ENCODE measurements at regions of chr17 and their contacts with region 1.

Region 1: DNA sequence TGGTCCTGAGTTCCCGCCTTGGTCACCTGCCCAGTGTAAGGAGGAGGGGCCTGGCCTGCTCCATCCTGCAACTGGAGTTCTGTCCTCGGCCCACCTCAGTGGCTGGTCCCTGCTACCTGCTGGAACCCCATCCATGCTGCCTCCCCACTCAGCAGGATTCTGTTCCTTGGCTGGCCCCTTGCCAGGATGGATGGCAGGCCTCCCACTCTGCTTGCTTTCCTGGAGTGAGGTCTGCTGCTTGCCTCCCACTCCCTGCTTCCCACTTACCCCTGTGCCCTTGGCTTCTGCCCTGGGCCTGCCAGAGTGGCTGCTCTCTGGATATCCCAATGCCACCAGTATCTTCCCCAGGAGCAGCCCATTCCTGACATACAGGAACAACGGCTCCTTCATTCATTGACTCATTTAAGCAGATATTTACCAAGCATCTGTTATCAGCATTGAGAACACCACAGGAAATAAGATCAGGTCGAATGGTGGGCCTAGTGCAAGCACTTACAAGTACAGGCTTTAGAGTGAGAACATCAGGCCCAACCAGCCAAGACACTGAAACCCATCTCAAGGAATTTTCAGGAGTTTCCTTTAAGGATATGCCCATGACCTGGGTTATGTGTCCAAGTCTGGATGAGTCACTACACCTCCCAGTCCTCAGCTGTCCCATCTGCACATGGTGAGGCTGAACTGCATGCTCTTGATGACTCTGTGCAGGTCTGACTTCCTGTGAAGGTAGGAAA is 17.0 kb upstream of the RPRML start:
- DNase-seq: no peak
- ATAC-seq: peak in 1 of 8 donors; percentile 28
- H3K4me3 ChIP-seq: no peak overlapping the region
- H3K27ac ChIP-seq: no peak overlapping the region
- H3K4me1 ChIP-seq: peaks cover 0 to 2% (median 0%) of the 10 kb centered on the region in 9 donors
- H3K27me3 ChIP-seq: no peaks in the 10 kb centered on the region
- CTCF ChIP-seq: no peak

Region 2: DNA sequence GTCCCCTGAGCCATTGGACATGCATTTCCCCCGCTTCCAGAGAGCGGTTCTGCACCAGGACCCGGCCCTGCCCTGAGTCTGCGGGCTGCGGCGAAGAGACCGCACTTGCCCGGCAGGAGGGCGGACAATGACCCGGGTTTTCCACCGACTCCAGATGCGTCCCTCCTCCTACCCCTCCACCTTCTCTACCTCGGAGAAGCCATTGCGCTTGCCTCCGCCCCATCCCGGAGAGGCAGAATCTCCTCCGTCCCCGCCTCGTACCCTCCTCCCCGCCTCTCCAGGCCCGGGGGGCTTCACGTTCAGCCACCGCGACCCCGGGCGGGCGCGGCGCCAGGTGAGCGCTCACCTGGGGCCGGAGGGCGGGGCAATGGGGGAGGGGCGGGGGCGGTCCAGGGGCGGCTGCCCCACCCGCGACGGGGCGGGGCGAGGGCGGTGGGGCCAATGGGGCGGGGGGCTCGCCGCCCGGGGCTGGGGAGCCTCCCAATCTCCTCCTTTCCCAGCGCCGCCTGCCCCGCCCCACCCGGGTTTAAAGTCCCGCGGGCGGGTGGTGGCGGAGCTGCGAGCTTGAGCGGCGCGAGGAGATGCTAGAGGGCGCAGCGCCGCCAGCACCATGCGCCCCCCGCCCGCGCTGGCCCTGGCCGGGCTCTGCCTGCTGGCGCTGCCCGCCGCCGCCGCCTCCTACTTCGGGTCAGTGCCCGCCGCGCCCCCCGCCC is 144.8 kb before region 1 on chr17 and contains the start of gene WNT9B:
- intact Hi-C with region 1: loop called in 1 of 10 experiments (anchors 5 kb)
- DNase-seq: no peak
- ATAC-seq: peak in 6 of 8 donors; percentile 44 to 57 (median 54)
- H3K4me3 ChIP-seq: peak within 1 kb of the TSS; percentile 1 to 56 (median 43)
- H3K27ac ChIP-seq: no peak within 1 kb of the TSS
- H3K4me1 ChIP-seq: peaks cover 0 to 12% (median 6%) of the 10 kb centered on the region in 9 donors
- H3K27me3 ChIP-seq: peaks cover 9 to 72% (median 53%) of the 10 kb centered on the region in 7 donors
- CTCF ChIP-seq: peak in 2 of 9 donors; percentile 19 to 23
- total RNA-seq, gene WNT9B: 0.18 to 2.4 (median 0.35) TPM

Region 3: DNA sequence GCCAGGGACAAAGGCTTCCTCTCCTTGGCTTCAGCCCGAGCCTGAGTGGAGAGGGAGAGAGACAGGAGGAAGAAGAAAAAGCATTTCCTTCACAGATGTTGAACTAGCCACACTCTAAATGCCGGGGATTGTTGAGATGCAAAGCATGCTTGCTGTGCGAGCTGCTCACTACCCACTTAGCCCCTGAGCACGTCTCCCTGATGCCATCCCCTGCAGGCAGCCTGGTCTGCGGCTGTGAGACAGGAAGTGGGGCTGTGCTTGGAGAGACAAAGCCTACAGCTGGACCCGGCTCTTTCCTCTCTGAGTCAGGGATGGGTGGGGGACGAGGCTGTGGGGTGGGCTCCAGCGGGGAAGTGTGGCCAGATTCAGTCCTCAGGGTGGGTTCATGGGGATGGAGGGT is 130.9 kb before region 1 on chr17:
- intact Hi-C with region 1: loop called in 1 of 10 experiments (anchors 10 kb)
- DNase-seq: no peak
- ATAC-seq: no peak
- H3K4me3 ChIP-seq: no peak overlapping the region
- H3K27ac ChIP-seq: no peak overlapping the region
- H3K4me1 ChIP-seq: no peaks in the 10 kb centered on the region
- H3K27me3 ChIP-seq: peaks cover 0 to 36% (median 20%) of the 10 kb centered on the region in 7 donors
- CTCF ChIP-seq: no peak

Region 4: GRCh38 chr17:46940621-46941404 is 55.2 kb before region 1 on chr17:
- intact Hi-C with region 1: loop called (anchors 1 to 5 kb)
- DNase-seq: peak; percentile 64 to 78
- ATAC-seq: peak; percentile 68 to 88 (median 78)
- H3K4me3 ChIP-seq: no peak overlapping the region
- H3K27ac ChIP-seq: peak overlapping the region in 1 of 10 donors; percentile 24
- H3K4me1 ChIP-seq: peaks cover 0 to 33% (median 18%) of the 10 kb centered on the region in 9 donors
- H3K27me3 ChIP-seq: no peaks in the 10 kb centered on the region
- CTCF ChIP-seq: peak; percentile 55 to 89 (median 84)

Region 5: DNA sequence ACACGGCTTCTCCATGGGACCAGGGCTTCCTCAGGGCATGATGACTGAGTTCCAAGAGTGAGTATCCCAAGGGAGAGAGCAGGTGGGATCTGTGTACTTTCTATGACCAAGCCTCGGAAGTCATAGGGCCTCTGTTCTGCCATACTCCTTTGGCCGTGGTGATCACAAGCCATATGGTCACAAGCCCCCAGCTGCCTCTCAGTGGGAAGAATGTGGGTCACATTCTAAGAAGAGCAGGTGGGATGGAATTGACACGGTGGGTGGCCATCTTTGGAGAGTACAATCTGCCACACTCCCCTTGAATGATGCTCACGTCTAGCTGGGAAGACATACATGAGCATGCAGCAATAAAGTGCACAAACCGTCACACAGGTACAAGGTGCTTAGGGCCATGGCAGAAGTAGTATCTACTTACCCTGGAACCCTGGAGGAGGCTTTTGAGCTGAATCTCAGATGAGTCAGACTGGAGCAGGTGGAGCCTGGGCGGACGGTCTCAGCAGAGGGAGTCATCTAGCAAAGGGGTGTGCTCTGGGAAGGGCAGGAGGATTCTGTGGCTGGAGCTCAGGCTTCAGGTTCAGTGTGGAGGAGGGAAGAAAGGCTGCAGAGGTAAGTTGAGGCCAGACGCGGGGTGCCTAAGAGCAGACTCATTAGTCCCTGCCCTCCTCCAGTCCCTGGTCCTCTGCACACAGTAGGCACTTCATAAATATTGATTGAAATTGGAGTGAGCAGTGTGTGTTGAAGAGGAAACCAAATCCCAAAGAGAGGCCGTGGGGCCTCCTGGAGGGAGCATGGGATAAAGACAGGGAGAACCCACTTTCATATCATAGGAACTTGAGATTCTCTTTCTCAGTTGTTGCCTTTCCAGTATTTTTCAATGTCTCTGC is 46.5 kb before region 1 on chr17:
- intact Hi-C with region 1: loop called in 3 of 10 experiments (anchors 2 to 5 kb)
- DNase-seq: no peak
- ATAC-seq: no peak
- H3K4me3 ChIP-seq: no peak overlapping the region
- H3K27ac ChIP-seq: no peak overlapping the region
- H3K4me1 ChIP-seq: peaks cover 0 to 17% (median 0%) of the 10 kb centered on the region in 9 donors
- H3K27me3 ChIP-seq: peaks cover 0 to 16% (median 0%) of the 10 kb centered on the region in 7 donors
- CTCF ChIP-seq: no peak

Region 6: GRCh38 chr17:47087093-47087492 is 91.1 kb after region 1 on chr17:
- intact Hi-C with region 1: no loop called
- DNase-seq: no peak
- ATAC-seq: no peak
- H3K4me3 ChIP-seq: no peak overlapping the region
- H3K27ac ChIP-seq: no peak overlapping the region
- H3K4me1 ChIP-seq: peaks cover 0 to 5% (median 0%) of the 10 kb centered on the region in 9 donors
- H3K27me3 ChIP-seq: no peaks in the 10 kb centered on the region
- CTCF ChIP-seq: no peak

Region 7: GRCh38 chr17:47172698-47173565 is 176.9 kb after region 1 on chr17:
- intact Hi-C with region 1: no loop called
- DNase-seq: no peak
- ATAC-seq: no peak
- H3K4me3 ChIP-seq: no peak overlapping the region
- H3K27ac ChIP-seq: no peak overlapping the region
- H3K4me1 ChIP-seq: peaks cover 0 to 67% (median 26%) of the 10 kb centered on the region in 9 donors
- H3K27me3 ChIP-seq: no peaks in the 10 kb centered on the region
- CTCF ChIP-seq: no peak